ENCODE measurements at regions of chr2 and their contacts with region 1.

Region 1: GRCh38 chr2:55843096-55843993 is 80.2 kb downstream of the EFEMP1 start:
- DNase-seq: peak; percentile 89 to 92
- H3K4me3 ChIP-seq: no peak overlapping the region
- H3K4me3 Mint-ChIP-seq: peak overlapping the region; percentile 11
- H3K27ac Mint-ChIP-seq: no peak overlapping the region
- H3K4me1 ChIP-seq: peaks cover 79% of the 10 kb centered on the region
- H3K4me1 Mint-ChIP-seq: peaks cover 32% of the 10 kb centered on the region
- H3K27me3 ChIP-seq: no peaks in the 10 kb centered on the region
- H3K27me3 Mint-ChIP-seq: no peaks in the 10 kb centered on the region
- CTCF ChIP-seq: no peak

Region 2: DNA sequence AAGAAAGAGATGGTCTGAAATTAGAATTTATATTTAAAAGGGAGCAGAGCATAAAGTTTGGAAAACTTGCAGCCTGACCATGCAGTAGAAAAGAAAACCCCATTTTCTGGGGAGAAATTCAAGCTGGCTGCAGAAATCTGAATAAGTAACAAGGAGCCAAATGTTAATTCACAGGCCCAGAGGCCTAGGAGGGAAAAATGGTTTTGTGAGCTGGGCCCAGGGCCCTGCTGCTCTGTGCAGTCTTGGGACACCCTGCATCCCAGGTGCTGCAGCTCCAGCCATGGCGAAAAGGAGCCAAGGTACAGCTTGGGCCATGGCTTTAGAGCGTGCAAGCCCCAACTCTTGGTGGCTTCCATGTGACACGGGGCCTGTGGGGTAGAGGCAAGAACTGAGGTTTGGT is 282.5 kb before region 1 on chr2:
- CTCF ChIA-PET with region 1: no interaction called
- POLR2A ChIA-PET with region 1: interaction called, 14 read pairs
- intact Hi-C with region 1: no loop called
- DNase-seq: no peak
- H3K4me3 ChIP-seq: no peak overlapping the region
- H3K4me3 Mint-ChIP-seq: no peak overlapping the region
- H3K27ac Mint-ChIP-seq: no peak overlapping the region
- H3K4me1 ChIP-seq: peaks cover 6% of the 10 kb centered on the region
- H3K4me1 Mint-ChIP-seq: peaks cover 12% of the 10 kb centered on the region
- H3K27me3 ChIP-seq: no peaks in the 10 kb centered on the region
- H3K27me3 Mint-ChIP-seq: no peaks in the 10 kb centered on the region
- CTCF ChIP-seq: no peak

Region 3: GRCh38 chr2:55718165-55719008 is 125.0 kb before region 1 on chr2:
- CTCF ChIA-PET with region 1: interaction called, 7 read pairs
- POLR2A ChIA-PET with region 1: no interaction called
- intact Hi-C with region 1: loop called (anchors 1 kb)
- DNase-seq: peak; percentile 65 to 81
- H3K4me3 ChIP-seq: no peak overlapping the region
- H3K4me3 Mint-ChIP-seq: no peak overlapping the region
- H3K27ac Mint-ChIP-seq: no peak overlapping the region
- H3K4me1 ChIP-seq: peaks cover 39% of the 10 kb centered on the region
- H3K4me1 Mint-ChIP-seq: peaks cover 31% of the 10 kb centered on the region
- H3K27me3 ChIP-seq: no peaks in the 10 kb centered on the region
- H3K27me3 Mint-ChIP-seq: no peaks in the 10 kb centered on the region
- CTCF ChIP-seq: peak; percentile 79 to 90

Region 4: GRCh38 chr2:55779459-55780421 is 63.6 kb before region 1 on chr2:
- CTCF ChIA-PET with region 1: no interaction called
- POLR2A ChIA-PET with region 1: no interaction called
- intact Hi-C with region 1: loop called (anchors 1 kb)
- DNase-seq: peak; percentile 70 to 81
- H3K4me3 ChIP-seq: no peak overlapping the region
- H3K4me3 Mint-ChIP-seq: peak overlapping the region; percentile 54
- H3K27ac Mint-ChIP-seq: peak overlapping the region; percentile 79
- H3K4me1 ChIP-seq: peaks cover 24% of the 10 kb centered on the region
- H3K4me1 Mint-ChIP-seq: peaks cover 21% of the 10 kb centered on the region
- H3K27me3 ChIP-seq: no peaks in the 10 kb centered on the region
- H3K27me3 Mint-ChIP-seq: no peaks in the 10 kb centered on the region
- CTCF ChIP-seq: no peak

Region 5: GRCh38 chr2:55961318-55961911 is 118.1 kb after region 1 on chr2:
- CTCF ChIA-PET with region 1: interaction called, 3 read pairs
- POLR2A ChIA-PET with region 1: no interaction called
- intact Hi-C with region 1: loop called (anchors 1 kb)
- DNase-seq: peak in 1 of 2 experiments; percentile 42
- H3K4me3 ChIP-seq: no peak overlapping the region
- H3K4me3 Mint-ChIP-seq: no peak overlapping the region
- H3K27ac Mint-ChIP-seq: peak overlapping the region; percentile 31
- H3K4me1 ChIP-seq: peaks cover 14% of the 10 kb centered on the region
- H3K4me1 Mint-ChIP-seq: peaks cover 21% of the 10 kb centered on the region
- H3K27me3 ChIP-seq: no peaks in the 10 kb centered on the region
- H3K27me3 Mint-ChIP-seq: no peaks in the 10 kb centered on the region
- CTCF ChIP-seq: peak; percentile 66 to 83